Activated CD4-positive, alpha-beta memory T cell treated with anti-CD3 and anti-CD28 coated beads for 36 hours (primary cell): ENCODE measurements at regions of chr10 and their contacts with region 1.

Region 1: DNA sequence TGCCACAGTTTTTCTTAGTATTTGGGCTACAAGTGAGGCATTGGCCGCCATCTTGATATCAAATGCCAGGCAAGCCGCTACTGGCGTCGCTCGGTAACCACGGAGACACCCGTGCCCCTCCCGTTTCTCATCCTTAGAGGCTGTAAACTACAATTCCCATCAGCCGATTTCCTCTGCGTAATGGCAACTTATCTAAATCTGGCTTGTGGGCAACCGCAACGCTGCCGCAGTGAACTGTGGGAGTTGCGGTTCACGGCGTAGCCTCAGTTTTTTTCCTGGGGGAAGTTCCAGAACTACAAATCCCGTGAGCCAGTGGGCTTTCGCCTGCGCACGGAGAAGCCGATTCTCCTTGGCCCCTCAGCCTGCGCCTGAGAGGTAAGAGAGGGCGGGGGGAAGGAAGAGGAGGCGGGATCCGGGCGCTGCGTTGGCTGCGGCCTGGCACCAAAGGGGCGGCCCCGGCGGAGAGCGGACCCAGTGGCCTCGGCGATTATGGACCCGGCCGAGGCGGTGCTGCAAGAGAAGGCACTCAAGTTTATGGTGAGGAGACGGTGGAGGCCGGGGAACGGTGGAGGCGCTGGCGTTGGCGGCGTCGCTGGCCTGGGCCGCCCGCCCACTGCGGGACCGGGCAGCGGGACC is at the start of gene BTRC:
- DNase-seq: peak; percentile 98
- H3K4me3 Mint-ChIP-seq: peak within 1 kb of the TSS; percentile 95
- H3K27ac Mint-ChIP-seq: peak within 1 kb of the TSS; percentile 92
- H3K4me1 Mint-ChIP-seq: peaks cover 28% of the 10 kb centered on the region
- H3K27me3 Mint-ChIP-seq: peaks cover 9% of the 10 kb centered on the region
- total RNA-seq, gene BTRC: 18.2 to 18.6 TPM

Region 2: GRCh38 chr10:101060036-101060950 is 293.5 kb before region 1 on chr10:
- CTCF ChIA-PET with region 1: no interaction called
- POLR2A ChIA-PET with region 1: no interaction called
- intact Hi-C with region 1: loop called (anchors 10 kb)
- DNase-seq: peak; percentile 92
- H3K4me3 Mint-ChIP-seq: peak overlapping the region; percentile 95
- H3K27ac Mint-ChIP-seq: peak overlapping the region; percentile 85
- H3K4me1 Mint-ChIP-seq: peaks cover 17% of the 10 kb centered on the region
- H3K27me3 Mint-ChIP-seq: peaks cover 21% of the 10 kb centered on the region

Region 3: DNA sequence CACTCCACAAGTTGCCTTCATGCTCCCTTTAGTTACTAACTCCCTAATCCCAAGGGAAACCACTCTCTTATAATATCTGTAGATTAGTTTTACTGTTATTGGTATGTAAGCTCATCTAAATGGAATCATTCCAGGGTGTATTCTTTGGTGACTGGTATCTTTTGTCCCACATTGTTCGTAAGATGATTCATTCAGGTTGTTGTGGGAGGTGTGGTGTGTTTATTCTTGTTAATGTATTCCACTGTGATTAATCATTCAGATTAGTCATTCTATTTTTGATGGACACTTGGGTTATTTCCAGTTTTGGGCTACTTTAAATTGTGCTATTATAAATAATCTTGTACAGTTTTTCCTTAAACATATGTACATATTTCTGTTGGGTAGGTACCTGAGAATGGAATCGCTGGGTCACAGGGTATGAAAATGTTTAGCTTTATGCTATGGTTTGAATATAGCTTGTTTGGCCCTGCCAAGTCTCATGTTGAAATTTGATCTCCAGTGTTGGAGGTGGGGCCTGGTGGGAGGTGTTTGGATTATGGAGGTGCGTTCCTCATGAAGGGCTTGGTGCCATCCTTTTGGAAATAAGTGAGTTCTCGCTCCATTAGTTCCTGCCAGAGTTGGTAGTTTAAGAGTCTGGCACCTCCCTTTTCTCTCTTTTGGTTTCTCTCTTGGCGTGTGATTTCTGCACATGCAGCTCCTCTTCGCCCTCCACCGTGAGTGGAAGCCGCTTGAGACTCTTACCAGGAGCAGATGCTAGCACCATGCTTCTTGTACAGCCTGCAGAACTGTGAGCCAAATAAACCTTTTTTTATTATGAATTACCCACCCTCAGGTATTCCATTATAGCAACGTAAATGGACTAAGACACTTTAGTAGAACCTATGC is 14.0 kb after region 1 on chr10:
- CTCF ChIA-PET with region 1: interaction called, 5 read pairs
- POLR2A ChIA-PET with region 1: interaction called, 6 read pairs
- intact Hi-C with region 1: loop called (anchors 1 kb)
- DNase-seq: peak; percentile 20
- H3K4me3 Mint-ChIP-seq: no peak overlapping the region
- H3K27ac Mint-ChIP-seq: peak overlapping the region; percentile 50
- H3K4me1 Mint-ChIP-seq: peaks cover 18% of the 10 kb centered on the region
- H3K27me3 Mint-ChIP-seq: no peaks in the 10 kb centered on the region

Region 4: GRCh38 chr10:101380353-101381017 is 26.7 kb after region 1 on chr10:
- CTCF ChIA-PET with region 1: interaction called, 4 read pairs
- POLR2A ChIA-PET with region 1: no interaction called
- intact Hi-C with region 1: loop called (anchors 1 kb)
- DNase-seq: no peak
- H3K4me3 Mint-ChIP-seq: no peak overlapping the region
- H3K27ac Mint-ChIP-seq: no peak overlapping the region
- H3K4me1 Mint-ChIP-seq: peaks cover 27% of the 10 kb centered on the region
- H3K27me3 Mint-ChIP-seq: no peaks in the 10 kb centered on the region

Region 5: GRCh38 chr10:101818119-101818871 is 464.5 kb after region 1 on chr10 and contains the start of gene OGA:
- CTCF ChIA-PET with region 1: no interaction called
- POLR2A ChIA-PET with region 1: no interaction called
- intact Hi-C with region 1: loop called (anchors 2 kb)
- DNase-seq: peak; percentile 99
- H3K4me3 Mint-ChIP-seq: peak within 1 kb of the TSS; percentile 97
- H3K27ac Mint-ChIP-seq: peak within 1 kb of the TSS; percentile 97
- H3K4me1 Mint-ChIP-seq: peaks cover 39% of the 10 kb centered on the region
- H3K27me3 Mint-ChIP-seq: no peaks in the 10 kb centered on the region
- total RNA-seq, gene OGA: 93.2 to 105 TPM

Region 6: GRCh38 chr10:102055647-102056419 is 702.0 kb after region 1 on chr10 and contains the start of gene ARMH3:
- CTCF ChIA-PET with region 1: no interaction called
- POLR2A ChIA-PET with region 1: no interaction called
- intact Hi-C with region 1: loop called (anchors 5 kb)
- DNase-seq: peak; percentile 95
- H3K4me3 Mint-ChIP-seq: peak within 1 kb of the TSS; percentile 93
- H3K27ac Mint-ChIP-seq: peak within 1 kb of the TSS; percentile 87
- H3K4me1 Mint-ChIP-seq: peaks cover 41% of the 10 kb centered on the region
- H3K27me3 Mint-ChIP-seq: no peaks in the 10 kb centered on the region
- total RNA-seq, gene ARMH3: 16.1 to 18.8 TPM